Heart right ventricle (tissue), 16 donors: ENCODE measurements at regions of chr7 and their contacts with region 1.

Region 1: GRCh38 chr7:92868683-92869293 is 32.4 kb upstream of the CDK6 start:
- DNase-seq: no peak
- ATAC-seq: no peak
- H3K4me3 ChIP-seq: no peak overlapping the region
- H3K27ac ChIP-seq: no peak overlapping the region
- H3K4me1 ChIP-seq: peaks cover 0 to 7% (median 0%) of the 10 kb centered on the region in 9 donors
- H3K27me3 ChIP-seq: no peaks in the 10 kb centered on the region
- CTCF ChIP-seq: no peak

Region 2: DNA sequence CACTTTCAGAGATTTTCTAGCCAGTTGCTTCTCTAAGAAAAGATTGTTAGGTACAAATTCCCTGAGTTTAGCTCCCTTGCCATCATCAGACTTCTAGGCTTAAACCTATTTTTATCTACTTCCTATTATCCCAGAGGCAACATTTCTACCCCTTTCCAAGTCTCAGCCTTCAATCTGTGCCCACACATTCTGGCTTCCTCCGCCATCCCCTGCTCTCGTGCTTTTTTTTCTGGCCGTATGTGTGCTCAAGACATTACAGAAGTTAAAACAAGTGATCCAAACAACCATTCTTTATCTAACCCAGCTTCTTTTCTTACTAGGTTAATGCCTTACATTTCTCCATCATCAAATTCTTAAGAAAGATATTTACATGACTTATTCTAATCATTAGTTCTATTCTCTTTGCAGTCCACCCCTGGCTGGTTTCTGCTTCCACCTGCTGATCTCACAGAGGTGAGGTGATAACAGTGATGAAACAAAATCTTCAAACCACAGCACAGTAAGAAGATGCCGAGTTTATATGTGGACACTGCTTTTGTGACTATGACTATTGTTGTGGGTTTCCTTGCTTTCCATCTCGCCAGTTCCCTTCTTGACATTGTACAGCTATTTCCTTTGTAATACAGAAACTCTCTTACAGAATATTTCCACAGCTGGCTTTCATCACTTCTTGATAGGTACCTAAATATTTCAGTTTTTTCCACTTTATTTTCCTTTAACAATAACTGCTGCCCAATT is 14.1 kb before region 1 on chr7:
- intact Hi-C with region 1: no loop called
- DNase-seq: no peak
- ATAC-seq: no peak
- H3K4me3 ChIP-seq: no peak overlapping the region
- H3K27ac ChIP-seq: no peak overlapping the region
- H3K4me1 ChIP-seq: no peaks in the 10 kb centered on the region
- H3K27me3 ChIP-seq: no peaks in the 10 kb centered on the region
- CTCF ChIP-seq: no peak

Region 3: GRCh38 chr7:92953657-92954056 is 84.9 kb after region 1 on chr7:
- intact Hi-C with region 1: no loop called
- DNase-seq: no peak
- ATAC-seq: no peak
- H3K4me3 ChIP-seq: no peak overlapping the region
- H3K27ac ChIP-seq: no peak overlapping the region
- H3K4me1 ChIP-seq: no peaks in the 10 kb centered on the region
- H3K27me3 ChIP-seq: no peaks in the 10 kb centered on the region
- CTCF ChIP-seq: no peak

Region 4: GRCh38 chr7:93062599-93062998 is 193.8 kb after region 1 on chr7:
- intact Hi-C with region 1: loop called in 1 of 10 experiments (anchors 5 kb)
- DNase-seq: no peak
- ATAC-seq: no peak
- H3K4me3 ChIP-seq: no peak overlapping the region
- H3K27ac ChIP-seq: no peak overlapping the region
- H3K4me1 ChIP-seq: no peaks in the 10 kb centered on the region
- H3K27me3 ChIP-seq: peaks cover 0 to 7% (median 0%) of the 10 kb centered on the region in 7 donors
- CTCF ChIP-seq: no peak

Region 5: GRCh38 chr7:93226310-93226709 is 357.5 kb after region 1 on chr7 and contains the start of gene HEPACAM2:
- intact Hi-C with region 1: no loop called
- DNase-seq: no peak
- ATAC-seq: no peak
- H3K4me3 ChIP-seq: no peak within 1 kb of the TSS
- H3K27ac ChIP-seq: no peak within 1 kb of the TSS
- H3K4me1 ChIP-seq: peaks cover 0 to 6% (median 2%) of the 10 kb centered on the region in 9 donors
- H3K27me3 ChIP-seq: no peaks in the 10 kb centered on the region
- CTCF ChIP-seq: no peak
- total RNA-seq, gene HEPACAM2: 0.19 to 0.24 TPM in 2 of 10 donors, not detected in the others